ENCODE measurements at regions of chr19 and their contacts with region 1.

Region 1: DNA sequence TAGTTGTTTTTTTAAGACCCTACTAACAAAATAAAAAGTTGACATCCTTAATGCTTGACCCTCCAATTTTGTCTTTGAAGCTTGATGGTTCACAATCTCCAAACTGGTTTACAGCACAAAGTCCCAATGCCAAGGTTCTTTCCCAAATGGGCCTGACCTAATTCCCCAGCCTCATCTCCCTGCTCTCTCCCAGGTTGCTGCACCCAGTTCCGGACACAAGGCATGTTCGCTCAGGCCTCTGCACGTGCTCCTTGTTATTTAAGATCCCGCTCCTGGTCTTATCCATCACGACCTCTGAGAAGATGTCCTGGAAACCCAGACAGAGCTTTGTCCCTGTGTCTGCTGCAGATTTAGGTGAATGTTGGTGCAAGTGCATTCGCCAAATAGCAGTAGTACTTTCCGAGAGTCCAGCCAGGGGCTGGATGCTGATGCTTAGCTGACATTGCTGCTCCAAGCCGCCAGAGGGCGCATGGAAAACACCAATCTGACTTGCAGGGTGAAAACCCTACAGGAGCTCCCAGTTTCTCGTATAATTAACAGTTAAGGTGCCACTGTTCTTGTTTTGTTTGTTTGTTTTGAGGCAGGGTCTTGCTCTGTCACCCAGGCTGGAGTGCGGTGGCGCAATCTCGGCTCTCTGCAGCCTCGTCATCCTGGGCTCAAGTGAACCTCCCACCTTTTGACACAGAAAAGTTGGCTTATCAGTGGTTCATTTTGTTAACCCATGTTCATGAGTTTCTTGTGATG is 18.5 kb downstream of the LYPD3 start:
- DNase-seq: peak; percentile 65
- H3K4me3 ChIP-seq: no peak overlapping the region
- H3K27ac ChIP-seq: no peak overlapping the region
- H3K4me1 ChIP-seq: no peaks in the 10 kb centered on the region
- H3K27me3 ChIP-seq: no peaks in the 10 kb centered on the region
- CTCF ChIP-seq: peak; percentile 79 to 88
- POLR2A ChIP-seq: no peak

Region 2: GRCh38 chr19:43457809-43458208 is 10.9 kb after region 1 on chr19:
- CTCF ChIA-PET with region 1: interaction called, 30 read pairs
- POLR2A ChIA-PET with region 1: no interaction called
- dilution Hi-C with region 1: no loop called
- intact Hi-C with region 1: no loop called
- DNase-seq: no peak
- H3K4me3 ChIP-seq: no peak overlapping the region
- H3K27ac ChIP-seq: no peak overlapping the region
- H3K4me1 ChIP-seq: no peaks in the 10 kb centered on the region
- H3K27me3 ChIP-seq: no peaks in the 10 kb centered on the region
- CTCF ChIP-seq: no peak
- POLR2A ChIP-seq: no peak

Region 3: DNA sequence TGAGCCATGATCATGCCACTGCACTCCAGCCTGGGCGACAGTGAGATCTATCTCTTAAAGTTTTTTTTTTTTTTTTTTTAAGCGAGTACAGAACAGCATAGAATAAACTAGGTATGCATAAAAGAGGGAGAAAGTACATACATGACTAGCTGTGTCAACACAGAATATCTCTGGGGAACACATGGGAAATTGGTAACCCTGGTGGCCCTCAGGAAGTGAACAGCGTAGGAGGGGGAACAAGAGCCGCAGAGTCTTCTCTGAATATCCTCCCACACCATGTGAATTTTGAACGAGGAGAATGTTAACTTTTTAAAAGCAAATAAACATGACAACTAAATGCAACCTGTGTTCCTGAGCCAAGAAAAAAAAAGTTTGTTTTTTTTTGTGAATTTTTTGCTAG is 42.4 kb after region 1 on chr19:
- CTCF ChIA-PET with region 1: interaction called, 14 read pairs
- POLR2A ChIA-PET with region 1: no interaction called
- dilution Hi-C with region 1: no loop called
- intact Hi-C with region 1: no loop called
- DNase-seq: no peak
- H3K4me3 ChIP-seq: no peak overlapping the region
- H3K27ac ChIP-seq: no peak overlapping the region
- H3K4me1 ChIP-seq: no peaks in the 10 kb centered on the region
- H3K27me3 ChIP-seq: no peaks in the 10 kb centered on the region
- CTCF ChIP-seq: no peak
- POLR2A ChIP-seq: no peak

Region 4: GRCh38 chr19:43519436-43520088 is 72.6 kb after region 1 on chr19:
- CTCF ChIA-PET with region 1: interaction called, 833 read pairs
- POLR2A ChIA-PET with region 1: interaction called, 3 read pairs
- dilution Hi-C with region 1: no loop called
- intact Hi-C with region 1: loop called (anchors 1 kb)
- DNase-seq: peak; percentile 78
- H3K4me3 ChIP-seq: no peak overlapping the region
- H3K27ac ChIP-seq: no peak overlapping the region
- H3K4me1 ChIP-seq: no peaks in the 10 kb centered on the region
- H3K27me3 ChIP-seq: no peaks in the 10 kb centered on the region
- CTCF ChIP-seq: peak; percentile 80 to 87
- POLR2A ChIP-seq: no peak

Region 5: GRCh38 chr19:43555185-43555770 is 108.4 kb after region 1 on chr19:
- CTCF ChIA-PET with region 1: interaction called, 13 read pairs
- POLR2A ChIA-PET with region 1: no interaction called
- dilution Hi-C with region 1: no loop called
- intact Hi-C with region 1: no loop called
- DNase-seq: peak; percentile 70
- H3K4me3 ChIP-seq: no peak overlapping the region
- H3K27ac ChIP-seq: no peak overlapping the region
- H3K4me1 ChIP-seq: no peaks in the 10 kb centered on the region
- H3K27me3 ChIP-seq: no peaks in the 10 kb centered on the region
- CTCF ChIP-seq: peak; percentile 84 to 94
- POLR2A ChIP-seq: no peak

Region 6: DNA sequence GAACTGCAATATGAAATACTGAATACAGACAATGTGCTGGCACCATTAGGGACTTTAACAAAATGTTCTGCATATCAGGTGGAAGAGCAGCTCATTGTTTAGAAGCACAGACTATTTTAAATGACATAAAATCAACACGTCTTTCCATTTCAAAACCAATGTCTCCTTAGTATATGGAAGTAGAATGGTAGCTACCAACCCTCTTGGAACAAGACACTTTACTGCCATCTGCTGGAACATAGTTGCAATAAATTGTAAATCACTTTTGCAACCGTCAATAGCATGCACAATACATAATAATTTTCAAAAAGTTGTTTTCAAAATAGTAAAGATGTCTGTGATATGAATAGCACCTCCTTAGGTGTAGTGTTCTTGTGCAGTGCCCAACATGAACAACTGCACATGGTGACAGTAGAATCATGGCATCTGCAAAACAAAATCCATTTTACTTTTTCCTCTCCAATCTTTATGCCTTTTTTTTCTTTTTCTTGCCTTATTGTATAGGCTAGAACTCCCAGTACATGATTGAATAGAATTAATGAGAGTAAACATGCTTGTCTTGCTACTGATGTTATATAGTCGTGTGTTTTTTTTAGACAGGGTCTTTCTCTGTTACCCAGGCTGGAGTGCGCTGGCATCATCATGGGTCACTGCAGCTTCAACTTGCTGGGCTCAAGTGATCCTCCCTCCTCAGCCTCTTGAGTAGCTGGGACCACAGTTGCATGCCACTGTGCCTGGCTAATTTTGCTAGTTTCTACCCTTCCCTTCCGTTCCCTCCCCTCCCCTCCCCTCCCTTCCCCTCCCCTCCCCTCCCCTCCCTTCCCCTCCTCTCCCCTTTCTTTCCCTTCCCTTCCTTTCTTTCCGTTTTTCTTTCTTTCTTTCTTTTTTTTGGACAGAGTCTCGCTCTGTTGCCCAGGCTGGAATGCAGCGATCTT is 363.1 kb after region 1 on chr19:
- CTCF ChIA-PET with region 1: interaction called, 15 read pairs
- POLR2A ChIA-PET with region 1: no interaction called
- dilution Hi-C with region 1: no loop called
- intact Hi-C with region 1: loop called (anchors 5 kb)
- DNase-seq: peak; percentile 58
- H3K4me3 ChIP-seq: no peak overlapping the region
- H3K27ac ChIP-seq: no peak overlapping the region
- H3K4me1 ChIP-seq: no peaks in the 10 kb centered on the region
- H3K27me3 ChIP-seq: no peaks in the 10 kb centered on the region
- CTCF ChIP-seq: peak; percentile 32 to 34
- POLR2A ChIP-seq: no peak